HAP-1 (cell line): ENCODE measurements at regions of chr12 and their contacts with region 1.

Region 1: DNA sequence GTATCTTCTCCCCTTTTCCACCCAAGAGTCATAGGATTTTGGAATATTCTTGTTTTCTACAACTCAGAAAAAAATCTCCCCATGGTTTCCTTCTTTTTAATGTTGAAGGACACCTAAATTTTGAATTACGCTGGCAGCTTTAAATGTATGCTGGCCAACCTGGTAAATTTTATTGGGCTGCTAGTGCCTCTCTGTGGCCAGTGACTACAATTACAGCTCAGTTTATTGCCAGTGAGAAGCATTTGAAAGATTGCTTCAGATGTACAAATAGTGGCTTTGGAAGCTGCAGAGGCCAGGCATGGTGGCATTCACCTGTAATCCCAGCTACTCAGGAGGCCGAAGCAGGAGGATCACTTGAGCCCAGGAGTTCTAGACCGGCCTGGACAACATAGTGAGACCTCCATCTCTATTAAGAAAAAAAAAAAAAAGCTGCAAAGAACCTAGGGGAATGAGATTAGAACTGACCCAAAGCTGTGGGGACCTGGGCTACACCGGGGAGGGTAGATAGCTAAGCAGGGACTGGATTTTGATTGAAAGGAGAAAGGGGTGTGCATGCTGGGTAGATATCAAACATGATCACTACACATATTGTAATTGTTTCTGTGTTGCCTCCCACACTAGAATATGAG is 7.6 kb upstream of the RAB21 start:
- DNase-seq: peak; percentile 63 to 82
- H3K4me3 ChIP-seq: no peak overlapping the region
- H3K4me1 ChIP-seq: peaks cover 30% of the 10 kb centered on the region
- H3K27me3 ChIP-seq: no peaks in the 10 kb centered on the region

Region 2: GRCh38 chr12:71415336-71416231 is 331.5 kb before region 1 on chr12:
- in situ Hi-C with region 1: loop called (anchors 10 kb)
- DNase-seq: peak; percentile 51 to 52
- H3K4me3 ChIP-seq: no peak overlapping the region
- H3K4me1 ChIP-seq: no peaks in the 10 kb centered on the region
- H3K27me3 ChIP-seq: no peaks in the 10 kb centered on the region